ENCODE measurements at regions of chr10 and their contacts with region 1.

Region 1: GRCh38 chr10:69375307-69376151 is 41.2 kb downstream of the TACR2 start:
- DNase-seq: peak; percentile 49 to 74 (median 56)
- H3K4me3 ChIP-seq: no peak overlapping the region
- H3K27ac ChIP-seq: no peak overlapping the region
- H3K4me1 ChIP-seq: peaks cover 13% of the 10 kb centered on the region
- H3K27me3 ChIP-seq: no peaks in the 10 kb centered on the region
- CTCF ChIP-seq: no peak
- EP300 ChIP-seq: no peak
- POLR2A ChIP-seq: no peak

Region 2: DNA sequence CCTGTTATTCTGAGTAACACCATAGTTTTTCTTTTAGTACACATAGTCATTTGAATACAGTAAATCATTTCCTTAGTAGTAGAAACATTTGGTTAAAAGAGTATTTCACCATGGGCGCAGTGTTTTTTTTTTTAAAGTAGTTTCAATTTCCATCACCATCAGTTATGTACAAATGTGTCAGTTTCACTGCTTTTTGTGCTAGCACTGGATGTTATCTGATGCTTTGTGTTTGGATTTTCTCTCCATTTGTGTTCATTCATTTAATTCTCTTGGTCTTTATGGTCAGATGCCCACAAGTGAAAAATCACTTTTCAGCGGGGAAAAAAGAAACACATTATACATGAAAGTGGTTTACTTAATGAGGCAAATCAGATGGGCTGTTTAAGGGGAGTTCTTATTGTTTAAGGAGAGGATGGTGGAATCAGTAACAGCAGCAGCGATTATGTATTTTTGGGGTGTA is 113.2 kb before region 1 on chr10:
- intact Hi-C with region 1: no loop called
- DNase-seq: no peak
- H3K4me3 ChIP-seq: no peak overlapping the region
- H3K27ac ChIP-seq: no peak overlapping the region
- H3K4me1 ChIP-seq: no peaks in the 10 kb centered on the region
- H3K27me3 ChIP-seq: no peaks in the 10 kb centered on the region
- CTCF ChIP-seq: no peak
- EP300 ChIP-seq: no peak
- POLR2A ChIP-seq: no peak

Region 3: GRCh38 chr10:69303632-69304051 is 71.9 kb before region 1 on chr10:
- intact Hi-C with region 1: loop called in 1 of 4 experiments (anchors 2 kb)
- DNase-seq: no peak
- H3K4me3 ChIP-seq: no peak overlapping the region
- H3K27ac ChIP-seq: no peak overlapping the region
- H3K4me1 ChIP-seq: no peaks in the 10 kb centered on the region
- H3K27me3 ChIP-seq: no peaks in the 10 kb centered on the region
- CTCF ChIP-seq: no peak
- EP300 ChIP-seq: no peak
- POLR2A ChIP-seq: no peak

Region 4: DNA sequence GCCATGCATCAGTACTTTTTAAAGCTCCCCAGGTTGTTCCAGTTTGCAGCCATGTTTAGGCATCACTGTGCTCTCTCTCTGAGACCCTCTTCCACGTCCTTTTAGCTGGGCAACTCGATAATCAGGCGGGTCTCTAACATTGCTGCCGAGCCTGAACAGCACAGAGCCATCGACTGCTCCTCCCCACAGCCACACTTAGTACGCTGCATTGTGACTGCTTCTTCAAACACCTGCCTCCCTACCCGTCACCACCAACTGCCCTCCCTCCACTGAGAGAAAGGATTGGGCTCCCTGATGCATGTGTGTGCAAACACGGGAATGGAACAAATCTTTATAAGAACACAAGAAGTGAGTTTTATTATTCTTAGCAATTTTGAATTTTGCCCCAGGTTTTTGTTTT is 52.6 kb after region 1 on chr10:
- intact Hi-C with region 1: no loop called
- DNase-seq: no peak
- H3K4me3 ChIP-seq: no peak overlapping the region
- H3K27ac ChIP-seq: no peak overlapping the region
- H3K4me1 ChIP-seq: no peaks in the 10 kb centered on the region
- H3K27me3 ChIP-seq: no peaks in the 10 kb centered on the region
- CTCF ChIP-seq: no peak
- EP300 ChIP-seq: no peak
- POLR2A ChIP-seq: no peak